Sigmoid colon (tissue), 7 donors: ENCODE measurements at regions of chr2 and their contacts with region 1.

Region 1: DNA sequence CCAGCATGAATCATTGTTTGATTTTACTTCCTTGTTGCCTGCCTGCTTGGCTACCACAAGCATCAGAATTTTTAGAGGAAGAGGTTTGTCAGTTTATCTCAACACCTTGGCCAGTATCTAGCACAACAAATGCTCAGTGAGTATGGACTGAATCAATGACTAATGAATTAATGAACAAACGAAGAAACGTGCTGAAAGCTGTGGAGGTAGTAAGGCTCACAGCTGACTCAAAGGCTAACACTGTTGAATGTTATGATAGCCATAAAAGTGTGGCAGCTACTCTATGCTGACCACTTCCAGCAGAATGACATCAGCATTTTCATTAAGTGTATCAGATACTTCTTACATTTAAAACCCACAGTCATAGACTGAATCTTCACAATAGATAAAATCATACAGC is 543.4 kb downstream of the IRS1 start:
- DNase-seq: no peak
- H3K4me3 ChIP-seq: no peak overlapping the region
- H3K27ac ChIP-seq: peak overlapping the region in 3 of 4 donors; percentile 27 to 48 (median 28)
- H3K4me1 ChIP-seq: peaks cover 0 to 19% (median 8%) of the 10 kb centered on the region in 4 donors
- H3K27me3 ChIP-seq: no peaks in the 10 kb centered on the region
- CTCF ChIP-seq: no peak
- EP300 ChIP-seq: no peak
- POLR2A ChIP-seq: no peak

Region 2: GRCh38 chr2:226625946-226626345 is 369.7 kb after region 1 on chr2:
- intact Hi-C with region 1: loop called (anchors 5 kb)
- DNase-seq: no peak
- H3K4me3 ChIP-seq: no peak overlapping the region
- H3K27ac ChIP-seq: peak overlapping the region in 2 of 4 donors; percentile 7 to 31
- H3K4me1 ChIP-seq: peaks cover 0 to 39% (median 19%) of the 10 kb centered on the region in 4 donors
- H3K27me3 ChIP-seq: no peaks in the 10 kb centered on the region
- CTCF ChIP-seq: no peak
- EP300 ChIP-seq: no peak
- POLR2A ChIP-seq: no peak